CD8-positive, alpha-beta T cell (primary cell): ENCODE measurements at regions of chr2 and their contacts with region 1.

Region 1: GRCh38 chr2:165401285-165401852 is 68.1 kb upstream of the CSRNP3 start:
- DNase-seq: peak in 3 of 9 experiments; percentile 8 to 68 (median 58)
- ATAC-seq: no peak
- H3K4me3 ChIP-seq: no peak overlapping the region
- H3K4me3 Mint-ChIP-seq: no peak overlapping the region
- H3K27ac ChIP-seq: no peak overlapping the region
- H3K27ac Mint-ChIP-seq: no peak overlapping the region
- H3K4me1 ChIP-seq: no peaks in the 10 kb centered on the region
- H3K4me1 Mint-ChIP-seq: no peaks in the 10 kb centered on the region
- H3K27me3 ChIP-seq: no peaks in the 10 kb centered on the region
- H3K27me3 Mint-ChIP-seq: peaks cover 17% of the 10 kb centered on the region
- CTCF ChIP-seq: peak; percentile 68

Region 2: GRCh38 chr2:165857876-165858275 is 456.5 kb after region 1 on chr2:
- CTCF ChIA-PET with region 1: no interaction called
- POLR2A ChIA-PET with region 1: no interaction called
- intact Hi-C with region 1: loop called in 1 of 2 experiments (anchors 5 kb)
- DNase-seq: no peak
- ATAC-seq: no peak
- H3K4me3 ChIP-seq: no peak overlapping the region
- H3K4me3 Mint-ChIP-seq: no peak overlapping the region
- H3K27ac ChIP-seq: no peak overlapping the region
- H3K27ac Mint-ChIP-seq: no peak overlapping the region
- H3K4me1 ChIP-seq: no peaks in the 10 kb centered on the region
- H3K4me1 Mint-ChIP-seq: no peaks in the 10 kb centered on the region
- H3K27me3 ChIP-seq: no peaks in the 10 kb centered on the region
- H3K27me3 Mint-ChIP-seq: no peaks in the 10 kb centered on the region
- CTCF ChIP-seq: no peak

Region 3: DNA sequence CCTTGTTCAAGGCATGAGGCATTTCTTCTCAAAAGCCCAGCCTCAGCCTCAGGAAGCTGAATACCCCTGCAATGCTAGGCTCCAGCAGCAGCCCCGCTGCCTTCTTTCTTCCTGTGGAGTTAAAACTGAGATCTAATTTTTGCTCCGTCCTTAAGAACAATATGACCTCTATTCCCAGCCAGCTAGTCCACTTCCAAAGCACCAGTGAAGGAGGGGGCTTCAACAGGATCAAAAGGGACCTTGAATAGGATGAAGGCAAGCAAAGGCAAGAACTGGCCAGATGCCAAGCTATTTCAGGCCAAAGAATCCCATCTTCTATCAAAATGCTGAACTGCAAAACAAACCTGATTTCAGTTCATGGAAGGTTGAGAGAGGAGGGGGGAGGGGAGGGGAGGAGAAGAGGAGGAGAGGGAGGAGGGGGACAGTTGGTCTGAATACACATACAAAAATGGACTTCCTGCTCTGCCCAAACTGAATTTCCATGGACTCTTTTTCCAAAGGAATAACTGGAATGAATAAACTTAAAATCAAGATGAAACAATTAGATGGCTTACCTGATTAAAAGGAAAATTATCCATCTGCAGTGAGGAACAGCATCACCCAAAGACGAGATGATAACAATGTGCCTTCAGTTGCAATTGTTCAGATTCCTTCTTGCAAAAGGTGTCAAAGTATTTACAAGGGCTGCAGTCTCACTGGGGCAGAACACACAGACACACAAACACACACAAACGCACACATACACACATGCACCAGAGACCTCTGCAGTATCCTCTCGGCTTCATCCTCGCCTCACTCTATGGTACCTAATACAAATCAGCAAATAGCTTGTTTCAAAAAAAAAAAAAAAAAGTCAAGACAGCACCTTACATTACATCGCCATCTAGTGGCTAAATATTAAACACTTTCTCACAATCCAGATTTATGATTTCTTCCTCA is 726.1 kb after region 1 on chr2 and contains the start of gene SCN1A:
- CTCF ChIA-PET with region 1: interaction called, 3 read pairs
- POLR2A ChIA-PET with region 1: no interaction called
- intact Hi-C with region 1: loop called in 1 of 2 experiments (anchors 2 kb)
- DNase-seq: peak in 2 of 9 experiments; percentile 29 to 51
- ATAC-seq: no peak
- H3K4me3 ChIP-seq: no peak within 1 kb of the TSS
- H3K4me3 Mint-ChIP-seq: no peak within 1 kb of the TSS
- H3K27ac ChIP-seq: no peak within 1 kb of the TSS
- H3K27ac Mint-ChIP-seq: no peak within 1 kb of the TSS
- H3K4me1 ChIP-seq: no peaks in the 10 kb centered on the region
- H3K4me1 Mint-ChIP-seq: peaks cover 4% of the 10 kb centered on the region
- H3K27me3 ChIP-seq: peaks cover 0 to 3% of the 10 kb centered on the region in 2 experiments
- H3K27me3 Mint-ChIP-seq: peaks cover 19% of the 10 kb centered on the region
- CTCF ChIP-seq: peak; percentile 77
- total RNA-seq, gene SCN1A: not detected